Dendritic cell treated with granulocyte-macrophage colony-stimulating factor and Interleukin-4, amounts not matched to agents 40 ng/mL and 50 ng/mL, for 4 days (primary cell): ENCODE measurements at regions of chr15 and their contacts with region 1.

Region 1: GRCh38 chr15:41603941-41604911 is 45.2 kb downstream of the TYRO3 start:
- H3K4me3 Mint-ChIP-seq: peak overlapping the region; percentile 80
- H3K27ac Mint-ChIP-seq: peak overlapping the region; percentile 16
- H3K4me1 Mint-ChIP-seq: peaks cover 9% of the 10 kb centered on the region
- H3K27me3 Mint-ChIP-seq: peaks cover 5% of the 10 kb centered on the region

Region 2: GRCh38 chr15:41483115-41483514 is 121.1 kb before region 1 on chr15:
- intact Hi-C with region 1: no loop called
- H3K4me3 Mint-ChIP-seq: no peak overlapping the region
- H3K27ac Mint-ChIP-seq: peak overlapping the region; percentile 52
- H3K4me1 Mint-ChIP-seq: peaks cover 6% of the 10 kb centered on the region
- H3K27me3 Mint-ChIP-seq: peaks cover 15% of the 10 kb centered on the region

Region 3: GRCh38 chr15:41666353-41666920 is 62.2 kb after region 1 on chr15:
- intact Hi-C with region 1: loop called (anchors 5 kb)
- H3K4me3 Mint-ChIP-seq: no peak overlapping the region
- H3K27ac Mint-ChIP-seq: no peak overlapping the region
- H3K4me1 Mint-ChIP-seq: peaks cover 26% of the 10 kb centered on the region
- H3K27me3 Mint-ChIP-seq: no peaks in the 10 kb centered on the region

Region 4: GRCh38 chr15:41695750-41696426 is 91.7 kb after region 1 on chr15:
- intact Hi-C with region 1: loop called (anchors 5 kb)
- H3K4me3 Mint-ChIP-seq: peak overlapping the region; percentile 48
- H3K27ac Mint-ChIP-seq: peak overlapping the region; percentile 73
- H3K4me1 Mint-ChIP-seq: peaks cover 27% of the 10 kb centered on the region
- H3K27me3 Mint-ChIP-seq: no peaks in the 10 kb centered on the region

Region 5: DNA sequence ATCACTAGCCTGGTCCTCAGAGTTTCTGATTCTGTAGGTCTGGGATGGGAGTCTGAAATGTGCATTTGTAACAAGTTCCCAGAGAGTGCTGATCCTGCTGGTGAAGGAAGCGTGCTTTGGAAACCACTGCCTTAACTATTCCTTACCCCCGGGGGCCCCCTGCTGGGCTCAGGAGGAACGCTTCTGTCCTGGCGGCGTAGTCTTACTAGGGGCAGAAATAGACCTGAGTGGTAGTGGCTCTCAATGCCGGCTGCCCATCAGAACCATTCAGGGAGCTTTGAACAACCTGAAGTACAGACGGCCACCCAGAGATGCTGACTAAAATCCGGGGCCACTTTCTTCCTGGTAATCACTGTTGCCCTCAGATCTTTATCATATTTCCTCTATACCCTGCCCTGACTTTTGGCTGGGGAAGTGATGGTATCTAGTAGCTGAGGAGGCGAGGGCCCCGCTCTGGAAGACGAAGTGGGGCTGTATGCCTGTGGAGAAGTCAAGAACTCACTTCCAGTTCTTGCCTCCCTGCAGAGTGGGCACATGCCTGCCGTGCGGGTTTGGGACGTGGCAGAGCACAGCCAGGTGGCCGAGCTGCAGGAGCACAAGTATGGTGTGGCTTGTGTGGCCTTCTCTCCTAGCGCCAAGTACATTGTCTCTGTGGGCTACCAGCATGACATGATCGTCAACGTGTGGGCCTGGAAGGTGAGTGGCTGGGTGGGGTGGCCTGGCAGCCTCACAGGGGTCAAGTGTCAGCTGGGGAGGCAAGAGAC is 207.4 kb after region 1 on chr15:
- intact Hi-C with region 1: loop called (anchors 5 kb)
- H3K4me3 Mint-ChIP-seq: no peak overlapping the region
- H3K27ac Mint-ChIP-seq: no peak overlapping the region
- H3K4me1 Mint-ChIP-seq: peaks cover 6% of the 10 kb centered on the region
- H3K27me3 Mint-ChIP-seq: no peaks in the 10 kb centered on the region